ENCODE measurements at regions of chr17 and their contacts with region 1.

Region 1: DNA sequence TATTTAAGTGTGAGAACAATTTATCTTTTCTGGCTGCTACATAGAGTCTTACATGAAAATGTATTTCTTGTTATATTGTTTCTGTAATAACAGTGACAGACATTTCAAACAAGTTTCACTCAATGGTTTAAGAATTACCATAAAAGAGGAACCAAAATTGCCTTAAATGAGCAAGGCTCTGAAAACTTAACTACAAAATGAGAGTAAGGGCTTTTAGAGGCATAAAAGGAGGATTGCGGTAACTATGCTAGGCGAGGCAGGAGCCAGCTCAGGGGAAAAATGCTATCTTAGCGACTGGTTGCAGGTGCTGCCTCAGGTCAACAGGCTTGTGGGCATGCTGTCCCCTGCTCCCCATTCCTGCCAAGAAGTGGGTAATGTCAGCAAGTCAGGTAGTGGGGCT is 81.7 kb upstream of the MSI2 start:
- DNase-seq: peak; percentile 56
- CTCF ChIP-seq: no peak

Region 2: GRCh38 chr17:57226793-57227192 is 52.2 kb after region 1 on chr17:
- in situ Hi-C with region 1: loop called (anchors 10 kb)
- DNase-seq: no peak
- CTCF ChIP-seq: no peak

Measured in GM13977 (cell line).